CD8-positive, alpha-beta T cell (primary cell): ENCODE measurements at regions of chr15 and their contacts with region 1.

Region 1: GRCh38 chr15:51737280-51738017 is at the start of gene LYSMD2:
- DNase-seq: peak; percentile 30 to 85 (median 71)
- ATAC-seq: peak; percentile 51
- H3K4me3 ChIP-seq: peak within 1 kb of the TSS; percentile 62 to 70
- H3K4me3 Mint-ChIP-seq: peak within 1 kb of the TSS; percentile 91
- H3K27ac ChIP-seq: peak within 1 kb of the TSS; percentile 66 to 92
- H3K27ac Mint-ChIP-seq: peak within 1 kb of the TSS; percentile 99
- H3K4me1 ChIP-seq: peaks cover 43% of the 10 kb centered on the region
- H3K4me1 Mint-ChIP-seq: peaks cover 55% of the 10 kb centered on the region
- H3K27me3 ChIP-seq: no peaks in the 10 kb centered on the region
- H3K27me3 Mint-ChIP-seq: no peaks in the 10 kb centered on the region
- CTCF ChIP-seq: no peak
- total RNA-seq, gene LYSMD2: 18.9 to 20.0 TPM

Region 2: GRCh38 chr15:50424066-50424890 is 1313.2 kb before region 1 on chr15 and contains the start of gene USP8:
- CTCF ChIA-PET with region 1: no interaction called
- POLR2A ChIA-PET with region 1: no interaction called
- intact Hi-C with region 1: loop called in 1 of 2 experiments (anchors 10 kb)
- DNase-seq: peak; percentile 86 to 97 (median 92)
- ATAC-seq: peak; percentile 96
- H3K4me3 ChIP-seq: peak within 1 kb of the TSS; percentile 84 to 95
- H3K4me3 Mint-ChIP-seq: peak within 1 kb of the TSS; percentile 98
- H3K27ac ChIP-seq: peak within 1 kb of the TSS; percentile 91 to 96
- H3K27ac Mint-ChIP-seq: peak within 1 kb of the TSS; percentile 99
- H3K4me1 ChIP-seq: peaks cover 27% of the 10 kb centered on the region
- H3K4me1 Mint-ChIP-seq: peaks cover 42% of the 10 kb centered on the region
- H3K27me3 ChIP-seq: no peaks in the 10 kb centered on the region
- H3K27me3 Mint-ChIP-seq: no peaks in the 10 kb centered on the region
- CTCF ChIP-seq: no peak
- total RNA-seq, gene USP8: 59.5 to 61.5 TPM

Region 3: DNA sequence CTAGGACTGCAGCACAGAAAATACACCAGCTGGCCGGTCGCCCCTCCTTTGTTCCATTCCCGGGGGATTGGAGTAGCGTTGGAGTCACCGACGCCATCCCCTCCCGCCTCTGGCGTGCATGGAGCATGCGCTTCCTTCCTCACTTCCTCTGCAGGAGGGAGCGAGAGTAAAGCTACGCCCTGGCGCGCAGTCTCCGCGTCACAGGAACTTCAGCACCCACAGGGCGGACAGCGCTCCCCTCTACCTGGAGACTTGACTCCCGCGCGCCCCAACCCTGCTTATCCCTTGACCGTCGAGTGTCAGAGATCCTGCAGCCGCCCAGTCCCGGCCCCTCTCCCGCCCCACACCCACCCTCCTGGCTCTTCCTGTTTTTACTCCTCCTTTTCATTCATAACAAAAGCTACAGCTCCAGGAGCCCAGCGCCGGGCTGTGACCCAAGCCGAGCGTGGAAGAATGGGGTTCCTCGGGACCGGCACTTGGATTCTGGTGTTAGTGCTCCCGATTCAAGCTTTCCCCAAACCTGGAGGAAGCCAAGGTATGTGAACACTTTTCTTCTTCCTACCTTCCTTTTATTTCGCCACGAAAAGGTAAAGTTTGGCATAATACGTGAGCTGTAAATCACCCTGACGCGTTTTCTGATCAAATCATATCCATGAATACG is 56.0 kb before region 1 on chr15 and contains the start of gene SCG3:
- CTCF ChIA-PET with region 1: interaction called, 4 read pairs
- POLR2A ChIA-PET with region 1: no interaction called
- intact Hi-C with region 1: loop called in 1 of 2 experiments (anchors 5 kb)
- DNase-seq: peak; percentile 11 to 66 (median 56)
- ATAC-seq: peak; percentile 87
- H3K4me3 ChIP-seq: no peak within 1 kb of the TSS
- H3K4me3 Mint-ChIP-seq: no peak within 1 kb of the TSS
- H3K27ac ChIP-seq: no peak within 1 kb of the TSS
- H3K27ac Mint-ChIP-seq: no peak within 1 kb of the TSS
- H3K4me1 ChIP-seq: no peaks in the 10 kb centered on the region
- H3K4me1 Mint-ChIP-seq: no peaks in the 10 kb centered on the region
- H3K27me3 ChIP-seq: peaks cover 7 to 9% of the 10 kb centered on the region in 2 experiments
- H3K27me3 Mint-ChIP-seq: peaks cover 42% of the 10 kb centered on the region
- CTCF ChIP-seq: no peak
- total RNA-seq, gene SCG3: not detected

Region 4: GRCh38 chr15:51750792-51751685 is 13.6 kb after region 1 on chr15 and contains the start of gene TMOD2:
- CTCF ChIA-PET with region 1: interaction called, 5 read pairs
- POLR2A ChIA-PET with region 1: interaction called, 22 read pairs
- intact Hi-C with region 1: loop called in 1 of 2 experiments (anchors 1 kb)
- DNase-seq: peak in 7 of 9 experiments; percentile 38 to 75 (median 52)
- ATAC-seq: peak; percentile 88
- H3K4me3 ChIP-seq: peak within 1 kb of the TSS; percentile 63 to 64
- H3K4me3 Mint-ChIP-seq: peak within 1 kb of the TSS; percentile 89
- H3K27ac ChIP-seq: peak within 1 kb of the TSS in 1 of 2 experiments; percentile 7
- H3K27ac Mint-ChIP-seq: peak within 1 kb of the TSS; percentile 74
- H3K4me1 ChIP-seq: peaks cover 13% of the 10 kb centered on the region
- H3K4me1 Mint-ChIP-seq: peaks cover 46% of the 10 kb centered on the region
- H3K27me3 ChIP-seq: peaks cover 0 to 2% of the 10 kb centered on the region in 2 experiments
- H3K27me3 Mint-ChIP-seq: no peaks in the 10 kb centered on the region
- CTCF ChIP-seq: no peak
- total RNA-seq, gene TMOD2: 5.1 to 5.3 TPM

Region 5: GRCh38 chr15:51801391-51801835 is 64.0 kb after region 1 on chr15:
- CTCF ChIA-PET with region 1: no interaction called
- POLR2A ChIA-PET with region 1: no interaction called
- intact Hi-C with region 1: no loop called
- DNase-seq: peak in 2 of 9 experiments; percentile 5 to 8
- ATAC-seq: no peak
- H3K4me3 ChIP-seq: no peak overlapping the region
- H3K4me3 Mint-ChIP-seq: no peak overlapping the region
- H3K27ac ChIP-seq: no peak overlapping the region
- H3K27ac Mint-ChIP-seq: no peak overlapping the region
- H3K4me1 ChIP-seq: no peaks in the 10 kb centered on the region
- H3K4me1 Mint-ChIP-seq: no peaks in the 10 kb centered on the region
- H3K27me3 ChIP-seq: no peaks in the 10 kb centered on the region
- H3K27me3 Mint-ChIP-seq: no peaks in the 10 kb centered on the region
- CTCF ChIP-seq: no peak

Region 6: GRCh38 chr15:51829360-51830275 is 92.2 kb after region 1 on chr15 and contains the start of gene TMOD3:
- CTCF ChIA-PET with region 1: no interaction called
- POLR2A ChIA-PET with region 1: interaction called, 3 read pairs
- intact Hi-C with region 1: loop called (anchors 5 kb)
- DNase-seq: peak; percentile 74 to 94 (median 90)
- ATAC-seq: peak; percentile 83
- H3K4me3 ChIP-seq: peak within 1 kb of the TSS; percentile 64 to 83
- H3K4me3 Mint-ChIP-seq: peak within 1 kb of the TSS; percentile 99
- H3K27ac ChIP-seq: peak within 1 kb of the TSS; percentile 66 to 74
- H3K27ac Mint-ChIP-seq: peak within 1 kb of the TSS; percentile 95
- H3K4me1 ChIP-seq: peaks cover 38% of the 10 kb centered on the region
- H3K4me1 Mint-ChIP-seq: peaks cover 42% of the 10 kb centered on the region
- H3K27me3 ChIP-seq: no peaks in the 10 kb centered on the region
- H3K27me3 Mint-ChIP-seq: no peaks in the 10 kb centered on the region
- CTCF ChIP-seq: no peak
- total RNA-seq, gene TMOD3: 32.7 to 32.9 TPM